Activated CD8-positive, alpha-beta memory T cell treated with anti-CD3 and anti-CD28 coated beads, Interleukin-2, amount 10 ng/mL, durations not matched to agents 7 days and 5 days (primary cell): ENCODE measurements at regions of chr2 and their contacts with region 1.

Region 1: DNA sequence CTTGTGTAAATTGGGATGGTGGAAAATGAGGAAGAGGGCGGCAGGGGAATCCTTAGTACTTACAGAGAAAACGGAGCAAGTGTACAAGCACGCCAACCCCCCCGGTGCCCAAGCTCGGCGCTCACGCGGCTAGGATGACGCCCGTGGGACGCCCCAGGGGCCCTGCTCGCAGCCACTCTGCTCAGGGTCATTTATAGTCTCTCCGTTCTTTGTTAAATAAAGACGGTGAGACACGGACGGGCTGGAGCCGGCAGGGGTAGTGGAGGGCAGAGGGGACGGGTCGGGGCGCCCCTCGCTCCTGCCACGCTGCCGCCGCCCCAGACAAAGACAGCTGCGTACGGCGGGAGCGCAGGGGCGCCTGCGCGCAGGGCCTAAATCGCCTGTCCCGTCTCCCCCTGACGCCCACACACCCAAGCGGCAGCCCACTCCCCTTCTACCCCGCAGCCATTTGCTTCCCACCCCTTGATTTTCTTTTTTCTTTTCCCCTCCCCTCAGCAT is 37.8 kb downstream of the PCBP1 start:
- DNase-seq: peak; percentile 70
- ATAC-seq: peak; percentile 69
- H3K4me3 Mint-ChIP-seq: peak overlapping the region; percentile 78
- H3K27ac Mint-ChIP-seq: peak overlapping the region; percentile 98
- H3K4me1 Mint-ChIP-seq: peaks cover 70% of the 10 kb centered on the region
- H3K27me3 Mint-ChIP-seq: no peaks in the 10 kb centered on the region

Region 2: DNA sequence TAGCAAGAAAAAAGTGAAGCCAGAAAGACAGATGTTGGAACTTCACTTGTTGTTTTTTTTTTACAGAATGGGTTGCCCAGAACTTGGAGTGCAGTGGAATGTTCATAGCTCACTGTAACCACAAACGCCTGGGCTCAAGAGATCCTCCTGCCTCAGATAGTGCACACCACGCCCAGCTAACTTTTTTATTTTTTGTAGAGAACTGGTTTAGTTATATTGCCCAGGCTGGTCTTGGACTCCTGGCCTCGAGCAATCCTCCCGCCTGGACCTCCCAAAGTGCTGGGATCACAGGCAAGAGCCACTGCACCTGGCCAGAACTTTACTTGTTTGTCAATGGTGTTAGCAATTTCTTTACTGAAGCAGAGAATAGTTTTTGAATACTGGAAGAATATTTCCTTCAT is 151.7 kb before region 1 on chr2:
- CTCF ChIA-PET with region 1: no interaction called
- DNase-seq: no peak
- ATAC-seq: no peak
- H3K4me3 Mint-ChIP-seq: no peak overlapping the region
- H3K27ac Mint-ChIP-seq: no peak overlapping the region
- H3K4me1 Mint-ChIP-seq: no peaks in the 10 kb centered on the region
- H3K27me3 Mint-ChIP-seq: no peaks in the 10 kb centered on the region

Region 3: GRCh38 chr2:70086838-70087701 is 38.0 kb before region 1 on chr2 and contains the start of gene PCBP1:
- CTCF ChIA-PET with region 1: interaction called, 19 read pairs
- DNase-seq: peak; percentile 96
- ATAC-seq: peak; percentile 55
- H3K4me3 Mint-ChIP-seq: peak within 1 kb of the TSS; percentile 100
- H3K27ac Mint-ChIP-seq: peak within 1 kb of the TSS; percentile 99
- H3K4me1 Mint-ChIP-seq: peaks cover 56% of the 10 kb centered on the region
- H3K27me3 Mint-ChIP-seq: no peaks in the 10 kb centered on the region
- total RNA-seq, gene PCBP1: 429 to 464 TPM

Region 4: DNA sequence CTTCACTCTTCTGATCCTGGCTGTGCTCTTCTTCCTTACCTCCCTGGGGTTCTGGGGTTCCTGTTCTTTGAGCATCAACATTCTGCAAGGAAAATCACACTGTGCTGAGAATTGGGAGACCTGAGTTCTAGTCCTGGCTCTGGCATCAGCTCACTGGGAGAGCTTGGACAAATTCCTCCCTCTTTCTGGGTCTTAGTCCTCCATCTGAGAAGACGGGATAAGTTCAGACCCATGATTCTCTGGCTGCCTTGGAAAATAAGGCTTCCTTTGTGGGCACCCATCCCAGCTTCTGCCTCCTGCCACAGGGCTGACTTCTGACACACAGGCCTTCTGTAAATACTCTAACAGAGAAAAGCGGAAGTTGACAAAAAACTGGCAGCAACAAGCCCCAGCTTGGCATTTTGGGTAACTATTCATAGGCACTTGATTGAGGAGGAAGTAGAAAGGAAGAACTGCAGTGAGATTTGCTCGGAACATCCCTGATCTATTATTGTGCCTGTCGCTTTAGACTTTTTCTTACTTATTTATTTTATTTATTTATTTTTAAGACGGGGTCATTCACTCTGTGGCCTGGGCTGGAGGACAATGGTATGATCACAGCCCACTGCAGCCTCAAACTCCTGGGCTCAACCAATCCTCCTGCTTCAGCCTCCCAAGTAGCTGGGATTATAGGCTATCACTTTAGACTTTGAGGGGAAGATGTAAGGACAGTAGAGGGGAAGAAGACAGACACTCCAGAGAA is 29.9 kb before region 1 on chr2:
- CTCF ChIA-PET with region 1: interaction called, 10 read pairs
- DNase-seq: peak; percentile 70
- ATAC-seq: peak; percentile 77
- H3K4me3 Mint-ChIP-seq: peak overlapping the region; percentile 67
- H3K27ac Mint-ChIP-seq: peak overlapping the region; percentile 92
- H3K4me1 Mint-ChIP-seq: peaks cover 54% of the 10 kb centered on the region
- H3K27me3 Mint-ChIP-seq: no peaks in the 10 kb centered on the region

Region 5: GRCh38 chr2:70104231-70105111 is 20.6 kb before region 1 on chr2:
- CTCF ChIA-PET with region 1: interaction called, 41 read pairs
- DNase-seq: peak; percentile 78
- ATAC-seq: no peak
- H3K4me3 Mint-ChIP-seq: peak overlapping the region; percentile 75
- H3K27ac Mint-ChIP-seq: peak overlapping the region; percentile 95
- H3K4me1 Mint-ChIP-seq: peaks cover 53% of the 10 kb centered on the region
- H3K27me3 Mint-ChIP-seq: no peaks in the 10 kb centered on the region

Region 6: GRCh38 chr2:70111752-70112591 is 13.1 kb before region 1 on chr2:
- CTCF ChIA-PET with region 1: interaction called, 41 read pairs
- DNase-seq: no peak
- ATAC-seq: no peak
- H3K4me3 Mint-ChIP-seq: no peak overlapping the region
- H3K27ac Mint-ChIP-seq: peak overlapping the region; percentile 34
- H3K4me1 Mint-ChIP-seq: peaks cover 49% of the 10 kb centered on the region
- H3K27me3 Mint-ChIP-seq: no peaks in the 10 kb centered on the region